PC-9 (cell line): ENCODE measurements at regions of chrX and their contacts with region 1.

Region 1: DNA sequence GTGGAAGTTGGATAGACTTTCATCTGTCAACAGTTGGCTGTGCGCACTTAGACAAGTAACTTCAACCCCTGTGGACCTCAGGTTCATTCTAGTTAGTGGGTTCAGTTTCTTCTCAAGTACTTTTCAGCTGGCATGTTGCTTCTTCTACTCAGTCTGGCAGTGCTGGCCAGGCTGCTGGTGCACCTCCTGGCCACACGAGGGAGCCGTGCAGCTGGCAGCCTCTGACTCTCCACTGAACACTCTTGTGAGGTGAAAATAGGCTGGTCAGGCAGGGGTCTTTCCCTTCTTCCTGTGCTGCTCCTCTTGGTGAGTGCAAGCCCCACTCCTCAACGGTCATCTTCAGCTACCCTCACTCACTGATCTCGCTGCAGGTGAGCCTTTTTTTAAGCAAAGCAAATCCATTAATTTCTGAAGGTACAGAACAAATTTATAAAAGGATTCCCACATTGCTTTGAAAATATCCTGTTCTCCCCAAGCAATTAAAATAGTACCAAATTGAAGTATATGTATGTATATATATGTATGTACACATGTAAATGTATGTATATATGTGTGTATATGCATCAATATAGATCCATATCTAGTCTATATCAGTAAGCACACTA is 30.6 kb downstream of the LONRF3 start:
- DNase-seq: peak; percentile 46 to 55
- H3K4me3 ChIP-seq: no peak overlapping the region
- H3K27ac ChIP-seq: no peak overlapping the region
- H3K4me1 ChIP-seq: no peaks in the 10 kb centered on the region
- H3K27me3 ChIP-seq: no peaks in the 10 kb centered on the region
- CTCF ChIP-seq: peak; percentile 90

Region 2: GRCh38 chrX:118603981-118604380 is 401.0 kb before region 1 on chrX:
- CTCF ChIA-PET with region 1: no interaction called
- POLR2A ChIA-PET with region 1: no interaction called
- intact Hi-C with region 1: loop called (anchors 5 kb)
- DNase-seq: peak; percentile 33 to 35
- H3K4me3 ChIP-seq: no peak overlapping the region
- H3K27ac ChIP-seq: no peak overlapping the region
- H3K4me1 ChIP-seq: 0 out of 2 replicates have a peak, but pooled peaks cover 7% of the 10 kb centered on the region
- H3K27me3 ChIP-seq: no peaks in the 10 kb centered on the region
- CTCF ChIP-seq: peak; percentile 87

Region 3: DNA sequence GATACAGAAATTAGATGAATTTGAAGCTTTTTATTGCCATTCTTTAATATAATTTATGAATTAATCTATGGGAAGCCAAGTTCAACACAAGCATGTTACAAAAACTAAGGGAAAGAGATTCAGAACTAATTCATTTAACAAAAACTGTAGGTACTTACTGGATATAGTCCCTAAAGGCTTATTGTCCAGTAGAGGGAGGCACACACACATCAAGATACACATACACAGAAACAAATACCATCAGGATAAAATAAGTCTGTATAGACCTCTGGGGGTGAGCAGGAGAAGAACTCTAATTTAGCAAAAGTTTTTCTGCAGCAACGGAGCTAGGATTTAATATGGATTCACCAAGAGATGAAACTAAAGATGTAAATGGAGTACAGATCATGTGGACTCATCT is 360.6 kb before region 1 on chrX:
- CTCF ChIA-PET with region 1: no interaction called
- POLR2A ChIA-PET with region 1: no interaction called
- intact Hi-C with region 1: loop called (anchors 10 kb)
- DNase-seq: peak; percentile 2 to 63
- H3K4me3 ChIP-seq: no peak overlapping the region
- H3K27ac ChIP-seq: no peak overlapping the region
- H3K4me1 ChIP-seq: no peaks in the 10 kb centered on the region
- H3K27me3 ChIP-seq: no peaks in the 10 kb centered on the region
- CTCF ChIP-seq: peak; percentile 77

Region 4: GRCh38 chrX:118847676-118848075 is 157.3 kb before region 1 on chrX:
- CTCF ChIA-PET with region 1: no interaction called
- POLR2A ChIA-PET with region 1: no interaction called
- intact Hi-C with region 1: loop called (anchors 2 kb)
- DNase-seq: peak in 1 of 2 experiments; percentile 59
- H3K4me3 ChIP-seq: no peak overlapping the region
- H3K27ac ChIP-seq: no peak overlapping the region
- H3K4me1 ChIP-seq: no peaks in the 10 kb centered on the region
- H3K27me3 ChIP-seq: no peaks in the 10 kb centered on the region
- CTCF ChIP-seq: peak; percentile 85

Region 5: GRCh38 chrX:118862091-118862490 is 142.9 kb before region 1 on chrX:
- CTCF ChIA-PET with region 1: no interaction called
- POLR2A ChIA-PET with region 1: no interaction called
- intact Hi-C with region 1: no loop called
- DNase-seq: no peak
- H3K4me3 ChIP-seq: no peak overlapping the region
- H3K27ac ChIP-seq: no peak overlapping the region
- H3K4me1 ChIP-seq: peaks cover 9% of the 10 kb centered on the region; the same call in 1 of the 2 replicates
- H3K27me3 ChIP-seq: no peaks in the 10 kb centered on the region
- CTCF ChIP-seq: no peak

Region 6: DNA sequence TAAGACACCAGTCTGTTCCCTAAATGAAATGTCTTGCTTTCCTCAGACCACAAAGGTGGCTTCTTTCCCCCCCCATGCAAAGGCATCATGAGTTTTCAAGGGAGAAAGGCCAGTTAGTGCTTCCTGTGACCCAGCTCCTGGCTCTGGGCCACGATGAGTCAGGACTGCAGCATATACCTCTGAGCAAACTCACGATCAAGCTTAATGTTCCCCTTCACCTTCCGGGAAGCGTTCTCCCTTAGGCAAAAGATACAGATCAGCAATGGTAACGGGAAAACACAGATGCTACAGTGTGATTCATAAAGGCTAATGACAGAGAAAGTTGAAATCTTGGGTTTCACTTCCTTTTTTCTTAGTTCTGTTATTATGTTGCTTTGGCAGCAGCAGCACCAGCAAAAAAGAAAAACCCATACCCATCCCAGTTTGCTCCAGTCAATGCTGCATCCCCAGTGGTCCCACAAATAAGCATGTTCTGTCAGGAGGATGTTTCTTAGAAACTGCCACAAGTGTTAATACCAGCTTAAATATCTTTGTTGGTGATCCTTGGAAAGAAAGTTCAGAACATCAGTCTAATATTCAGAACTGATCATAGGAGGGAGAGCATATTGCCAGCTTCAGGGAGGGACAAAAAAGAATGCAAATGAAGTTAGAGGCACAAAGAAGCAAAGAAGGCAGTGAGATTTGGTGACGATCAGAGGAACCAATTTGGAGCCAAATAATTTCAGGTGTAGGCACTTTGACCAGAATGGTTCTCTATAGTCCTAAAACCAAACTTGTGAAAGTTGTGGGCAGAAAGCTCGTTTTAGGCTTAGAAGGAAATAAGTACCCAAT is 10.6 kb after region 1 on chrX:
- CTCF ChIA-PET with region 1: no interaction called
- POLR2A ChIA-PET with region 1: no interaction called
- intact Hi-C with region 1: no loop called
- DNase-seq: peak; percentile 86 to 98
- H3K4me3 ChIP-seq: no peak overlapping the region
- H3K27ac ChIP-seq: peak overlapping the region; percentile 87
- H3K4me1 ChIP-seq: peaks cover 39% of the 10 kb centered on the region
- H3K27me3 ChIP-seq: no peaks in the 10 kb centered on the region
- CTCF ChIP-seq: no peak

Region 7: DNA sequence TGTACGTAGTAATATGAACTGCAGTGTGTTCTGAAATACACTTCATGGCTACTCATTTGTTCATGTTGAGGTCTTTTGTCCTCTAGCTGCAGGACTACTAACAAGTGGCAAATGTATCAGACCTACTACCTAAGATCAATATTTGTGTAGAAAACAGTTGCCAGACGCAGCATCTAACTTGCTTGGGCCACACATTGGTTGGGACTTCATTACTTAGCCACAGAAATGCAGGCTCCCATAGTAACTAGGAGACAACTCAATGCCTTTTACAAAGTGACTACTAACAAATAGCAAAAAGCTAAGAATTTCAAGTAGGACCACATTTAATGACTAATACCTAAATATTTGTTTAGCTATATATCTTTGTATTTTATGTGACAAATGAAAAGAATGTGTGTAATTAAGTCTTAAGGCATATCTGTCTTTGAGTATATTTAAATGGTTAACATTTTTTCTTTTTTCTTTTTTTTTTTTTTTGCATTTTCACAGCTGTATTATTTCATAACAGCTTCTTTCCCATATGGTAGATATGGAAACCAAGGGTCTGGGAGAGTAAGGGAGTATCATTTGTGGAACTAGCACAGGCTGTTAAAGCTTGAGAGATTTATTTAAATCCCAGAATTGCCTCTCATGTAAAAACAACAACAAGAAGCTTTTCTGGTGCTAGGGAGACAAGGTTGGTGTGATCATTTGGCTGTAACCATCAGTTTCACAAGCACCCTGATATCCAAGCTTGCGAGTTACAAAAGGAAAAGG is 70.4 kb after region 1 on chrX:
- CTCF ChIA-PET with region 1: interaction called, 17 read pairs
- POLR2A ChIA-PET with region 1: no interaction called
- intact Hi-C with region 1: no loop called
- DNase-seq: peak in 1 of 2 experiments; percentile 58
- H3K4me3 ChIP-seq: no peak overlapping the region
- H3K27ac ChIP-seq: no peak overlapping the region
- H3K4me1 ChIP-seq: no peaks in the 10 kb centered on the region
- H3K27me3 ChIP-seq: no peaks in the 10 kb centered on the region; the same call in 1 of the 2 replicates
- CTCF ChIP-seq: no peak

Region 8: GRCh38 chrX:119211649-119212014 is 206.6 kb after region 1 on chrX:
- CTCF ChIA-PET with region 1: no interaction called
- POLR2A ChIA-PET with region 1: no interaction called
- intact Hi-C with region 1: loop called (anchors 10 kb)
- DNase-seq: no peak
- H3K4me3 ChIP-seq: no peak overlapping the region
- H3K27ac ChIP-seq: no peak overlapping the region
- H3K4me1 ChIP-seq: no peaks in the 10 kb centered on the region
- H3K27me3 ChIP-seq: peaks cover 24% of the 10 kb centered on the region
- CTCF ChIP-seq: no peak